ENCODE measurements at regions of chr16 and their contacts with region 1.

Region 1: GRCh38 chr16:4957720-4958509 is at the start of gene SEC14L5:
- DNase-seq: peak; percentile 94 to 98 (median 97)
- ATAC-seq: peak; percentile 95 to 98 (median 96)
- H3K4me3 ChIP-seq: peak within 1 kb of the TSS in 11 of 12 donors; percentile 20 to 67 (median 54)
- H3K27ac ChIP-seq: peak within 1 kb of the TSS in 9 of 12 donors; percentile 2 to 69 (median 36)
- H3K4me1 ChIP-seq: peaks cover 0 to 17% (median 12%) of the 10 kb centered on the region in 12 donors
- H3K27me3 ChIP-seq: peaks cover 0 to 9% (median 0%) of the 10 kb centered on the region in 9 donors
- CTCF ChIP-seq: no peak
- POLR2A ChIP-seq: no peak
- total RNA-seq, gene SEC14L5: 1.6 to 25.4 (median 11.6) TPM

Region 2: GRCh38 chr16:4506450-4506849 is 451.5 kb before region 1 on chr16:
- intact Hi-C with region 1: loop called in 8 of 10 experiments (anchors 5 to 10 kb)
- DNase-seq: peak in 4 of 5 donors; percentile 57 to 66 (median 61)
- ATAC-seq: peak; percentile 69 to 77 (median 70)
- H3K4me3 ChIP-seq: no peak overlapping the region
- H3K27ac ChIP-seq: peak overlapping the region in 3 of 12 donors; percentile 21 to 84 (median 38)
- H3K4me1 ChIP-seq: peaks cover 0 to 51% (median 26%) of the 10 kb centered on the region in 12 donors
- H3K27me3 ChIP-seq: no peaks in the 10 kb centered on the region
- CTCF ChIP-seq: peak; percentile 71 to 87 (median 80)
- POLR2A ChIP-seq: no peak

Region 3: DNA sequence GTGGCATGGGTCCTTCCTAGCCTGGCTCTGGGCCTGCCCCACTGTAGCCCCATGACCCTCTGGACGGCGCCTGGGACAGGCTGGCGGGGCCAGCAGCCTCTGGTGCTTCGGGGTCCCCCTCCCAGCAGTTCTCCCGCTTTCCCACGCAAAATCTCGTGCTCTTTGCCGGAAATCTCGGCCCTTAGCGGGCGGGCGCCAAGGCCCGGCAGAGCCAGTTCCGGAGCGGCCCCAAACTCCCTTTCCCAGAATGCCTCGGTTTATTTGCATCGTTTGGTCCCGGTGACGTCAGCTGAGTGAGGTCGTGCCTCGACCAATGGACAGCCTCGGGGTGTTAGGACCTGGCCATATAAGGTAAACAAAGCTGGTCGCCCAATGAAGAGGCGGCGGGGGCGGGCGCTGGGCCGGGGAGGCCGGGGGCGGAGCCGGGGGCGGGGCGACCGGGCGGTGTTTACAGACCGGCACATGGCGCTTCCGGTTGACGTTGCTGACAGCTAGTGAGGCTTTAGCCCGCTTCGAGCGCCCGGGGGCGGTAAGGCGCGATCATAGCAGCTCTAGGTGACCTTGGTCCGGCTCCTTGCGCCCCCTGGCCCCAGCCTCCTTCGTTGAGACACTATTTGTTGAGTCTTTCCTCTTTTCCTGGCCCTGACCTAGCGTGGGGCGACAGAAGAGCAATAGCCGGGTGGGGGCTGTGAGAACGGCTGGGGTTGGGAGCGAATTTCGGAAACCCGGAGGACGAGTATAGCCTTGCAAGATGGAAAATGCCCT is 341.7 kb before region 1 on chr16:
- intact Hi-C with region 1: loop called in 2 of 10 experiments (anchors 5 to 10 kb)
- DNase-seq: peak; percentile 99 to 100 (median 100)
- ATAC-seq: peak; percentile 88 to 93 (median 92)
- H3K4me3 ChIP-seq: peak overlapping the region; percentile 43 to 98 (median 77)
- H3K27ac ChIP-seq: peak overlapping the region; percentile 94 to 99 (median 98)
- H3K4me1 ChIP-seq: peaks cover 4 to 57% (median 37%) of the 10 kb centered on the region in 12 donors
- H3K27me3 ChIP-seq: no peaks in the 10 kb centered on the region
- CTCF ChIP-seq: peak in 10 of 12 donors; percentile 24 to 70 (median 50)
- POLR2A ChIP-seq: peak; percentile 66 to 78

Region 4: GRCh38 chr16:4682616-4683254 is 275.2 kb before region 1 on chr16:
- intact Hi-C with region 1: loop called in 1 of 10 experiments (anchors 10 kb)
- DNase-seq: peak in 1 of 5 donors; percentile 73
- ATAC-seq: no peak
- H3K4me3 ChIP-seq: no peak overlapping the region
- H3K27ac ChIP-seq: no peak overlapping the region
- H3K4me1 ChIP-seq: peaks cover 0 to 34% (median 14%) of the 10 kb centered on the region in 12 donors
- H3K27me3 ChIP-seq: no peaks in the 10 kb centered on the region
- CTCF ChIP-seq: peak in 7 of 12 donors; percentile 13 to 44 (median 34)
- POLR2A ChIP-seq: no peak

Region 5: DNA sequence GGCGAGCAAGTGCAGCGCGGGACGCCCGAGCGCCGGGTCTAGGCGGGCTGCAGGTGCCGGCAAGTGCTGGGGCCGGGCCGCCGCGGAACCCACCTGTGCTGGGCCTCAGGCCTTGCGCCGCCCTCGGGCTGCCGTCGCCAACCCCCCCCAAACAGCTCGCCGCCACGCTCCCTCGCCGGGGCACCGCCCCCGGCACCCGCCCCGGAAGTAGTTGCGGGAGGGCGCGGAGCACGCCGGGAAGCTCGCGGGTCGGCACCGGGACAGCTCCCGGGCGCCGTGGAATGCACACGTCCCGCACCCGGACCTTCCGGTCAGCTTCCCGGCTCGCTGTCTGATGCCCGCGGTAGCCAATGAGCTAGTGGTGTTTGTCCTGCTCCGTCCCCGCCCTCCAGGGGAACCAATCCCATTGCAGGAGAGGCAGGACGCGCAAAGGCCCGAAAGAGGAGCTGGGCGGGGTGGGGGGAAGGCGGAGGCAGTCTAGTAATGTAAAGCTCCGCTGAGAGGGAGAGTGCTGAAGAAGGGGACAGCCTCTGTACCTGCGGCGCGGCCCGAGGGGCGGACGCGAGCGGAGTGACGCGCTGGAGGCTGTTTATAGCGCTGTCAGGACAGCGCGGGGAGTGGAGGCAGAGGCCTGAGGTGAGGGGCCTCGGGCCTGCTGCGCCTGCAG is 223.7 kb before region 1 on chr16 and contains the starts of genes ANKS3 and DNAAF8:
- intact Hi-C with region 1: loop called in 4 of 10 experiments (anchors 2 to 10 kb)
- DNase-seq: peak; percentile 95 to 99 (median 97)
- ATAC-seq: peak; percentile 98 to 99 (median 98)
- H3K4me3 ChIP-seq: peak within 1 kb of the TSS; percentile 61 to 99 (median 91)
- H3K27ac ChIP-seq: peak within 1 kb of the TSS; percentile 47 to 90 (median 78)
- H3K4me1 ChIP-seq: peaks cover 0 to 17% (median 15%) of the 10 kb centered on the region in 12 donors
- H3K27me3 ChIP-seq: no peaks in the 10 kb centered on the region
- CTCF ChIP-seq: no peak
- POLR2A ChIP-seq: peak in 1 of 2 donors; percentile 56
- total RNA-seq, gene ANKS3: 5.1 to 12.5 (median 8.6) TPM
- total RNA-seq, gene DNAAF8: 0.34 to 3.4 (median 0.70) TPM

Region 6: GRCh38 chr16:4802659-4803287 is 155.1 kb before region 1 on chr16:
- intact Hi-C with region 1: loop called in 5 of 10 experiments (anchors 2 to 10 kb)
- DNase-seq: peak; percentile 94 to 96 (median 95)
- ATAC-seq: peak; percentile 89 to 94 (median 92)
- H3K4me3 ChIP-seq: peak overlapping the region; percentile 68 to 96 (median 86)
- H3K27ac ChIP-seq: peak overlapping the region; percentile 47 to 96 (median 90)
- H3K4me1 ChIP-seq: peaks cover 0 to 50% (median 25%) of the 10 kb centered on the region in 12 donors
- H3K27me3 ChIP-seq: no peaks in the 10 kb centered on the region
- CTCF ChIP-seq: peak in 8 of 12 donors; percentile 5 to 53 (median 32)
- POLR2A ChIP-seq: peak in 1 of 2 donors; percentile 53

Region 7: DNA sequence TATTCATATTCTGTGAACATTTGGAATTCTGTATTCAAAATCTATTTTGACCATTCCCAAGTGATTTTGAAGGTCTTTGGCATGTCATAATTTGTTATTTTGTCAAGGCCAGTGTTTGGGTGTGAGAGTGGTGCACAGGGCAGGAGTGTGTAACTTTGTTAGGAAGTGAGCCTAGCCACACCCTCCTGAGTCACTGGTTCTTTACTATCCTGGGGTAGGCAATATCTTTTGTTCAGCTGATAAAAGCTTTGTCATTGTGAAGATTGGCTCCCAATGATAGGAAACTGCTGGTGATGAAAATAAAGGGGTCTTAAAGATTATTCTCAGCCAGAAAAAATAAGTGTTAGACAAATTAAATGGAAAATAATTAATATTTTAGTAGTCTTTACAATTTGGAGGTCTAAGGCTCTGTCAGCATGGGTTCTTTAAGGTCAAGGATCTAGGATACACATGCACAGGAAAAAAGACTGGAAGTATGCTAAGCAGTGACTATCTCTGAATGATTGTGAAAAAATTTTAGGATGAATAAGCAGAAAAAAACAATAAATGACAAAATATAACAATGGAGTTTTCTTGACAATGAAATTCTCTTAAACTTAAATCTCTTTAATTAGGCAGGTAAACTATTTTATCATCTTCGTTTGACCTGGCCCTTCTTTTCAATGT is 105.6 kb before region 1 on chr16:
- intact Hi-C with region 1: loop called in 2 of 10 experiments (anchors 5 to 10 kb)
- DNase-seq: peak in 1 of 5 donors; percentile 40
- ATAC-seq: peak in 2 of 4 donors; percentile 38 to 44
- H3K4me3 ChIP-seq: no peak overlapping the region
- H3K27ac ChIP-seq: peak overlapping the region in 8 of 12 donors; percentile 2 to 45 (median 26)
- H3K4me1 ChIP-seq: peaks cover 0 to 51% (median 36%) of the 10 kb centered on the region in 12 donors
- H3K27me3 ChIP-seq: no peaks in the 10 kb centered on the region
- CTCF ChIP-seq: no peak
- POLR2A ChIP-seq: no peak

Region 8: DNA sequence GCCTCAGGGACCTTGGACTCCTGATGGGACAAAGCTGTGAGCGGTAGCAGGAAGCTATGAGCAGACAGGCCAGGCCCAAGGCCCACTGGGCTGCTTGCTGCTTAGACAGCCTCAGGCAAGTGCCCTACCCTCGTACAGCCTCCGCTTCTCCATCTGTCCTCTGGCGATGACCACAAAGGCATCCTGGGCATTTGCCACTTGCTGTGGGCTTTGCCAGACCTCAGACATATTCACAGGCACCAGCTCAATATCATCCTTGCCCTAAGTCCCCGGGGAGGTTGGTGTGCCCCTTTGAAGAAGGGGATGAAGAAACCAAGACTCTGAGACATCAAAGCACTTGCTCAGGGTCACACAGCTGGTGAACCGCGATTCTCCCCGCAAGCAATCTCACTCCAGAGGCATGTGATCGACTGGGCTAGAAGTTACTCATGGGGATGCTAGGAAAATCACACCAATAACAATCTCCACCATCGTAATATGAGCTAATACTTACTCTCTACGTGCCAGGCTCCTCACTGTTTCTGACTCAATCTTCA is 42.6 kb before region 1 on chr16:
- intact Hi-C with region 1: no loop called
- DNase-seq: no peak
- ATAC-seq: no peak
- H3K4me3 ChIP-seq: no peak overlapping the region
- H3K27ac ChIP-seq: no peak overlapping the region
- H3K4me1 ChIP-seq: no peaks in the 10 kb centered on the region
- H3K27me3 ChIP-seq: no peaks in the 10 kb centered on the region
- CTCF ChIP-seq: no peak
- POLR2A ChIP-seq: no peak

Measured in heart left ventricle (tissue), 16 donors.